Activated CD4-positive, alpha-beta memory T cell treated with anti-CD3 and anti-CD28 coated beads, Interleukin-2, amount 10 ng/mL, durations not matched to agents 7 days and 5 days (primary cell): ENCODE measurements at regions of chr1 and their contacts with region 1.

Region 1: GRCh38 chr1:10398734-10399623 is at the start of gene PGD:
- DNase-seq: peak; percentile 98
- H3K4me3 Mint-ChIP-seq: peak within 1 kb of the TSS; percentile 89
- H3K27ac Mint-ChIP-seq: peak within 1 kb of the TSS; percentile 67
- H3K4me1 Mint-ChIP-seq: peaks cover 44% of the 10 kb centered on the region
- H3K27me3 Mint-ChIP-seq: no peaks in the 10 kb centered on the region
- total RNA-seq, gene PGD: 80.8 to 84.3 TPM

Region 2: GRCh38 chr1:10387413-10388079 is 11.4 kb before region 1 on chr1:
- CTCF ChIA-PET with region 1: interaction called, 6 read pairs
- POLR2A ChIA-PET with region 1: interaction called, 17 read pairs
- DNase-seq: no peak
- H3K4me3 Mint-ChIP-seq: no peak overlapping the region
- H3K27ac Mint-ChIP-seq: no peak overlapping the region
- H3K4me1 Mint-ChIP-seq: no peaks in the 10 kb centered on the region
- H3K27me3 Mint-ChIP-seq: no peaks in the 10 kb centered on the region

Region 3: DNA sequence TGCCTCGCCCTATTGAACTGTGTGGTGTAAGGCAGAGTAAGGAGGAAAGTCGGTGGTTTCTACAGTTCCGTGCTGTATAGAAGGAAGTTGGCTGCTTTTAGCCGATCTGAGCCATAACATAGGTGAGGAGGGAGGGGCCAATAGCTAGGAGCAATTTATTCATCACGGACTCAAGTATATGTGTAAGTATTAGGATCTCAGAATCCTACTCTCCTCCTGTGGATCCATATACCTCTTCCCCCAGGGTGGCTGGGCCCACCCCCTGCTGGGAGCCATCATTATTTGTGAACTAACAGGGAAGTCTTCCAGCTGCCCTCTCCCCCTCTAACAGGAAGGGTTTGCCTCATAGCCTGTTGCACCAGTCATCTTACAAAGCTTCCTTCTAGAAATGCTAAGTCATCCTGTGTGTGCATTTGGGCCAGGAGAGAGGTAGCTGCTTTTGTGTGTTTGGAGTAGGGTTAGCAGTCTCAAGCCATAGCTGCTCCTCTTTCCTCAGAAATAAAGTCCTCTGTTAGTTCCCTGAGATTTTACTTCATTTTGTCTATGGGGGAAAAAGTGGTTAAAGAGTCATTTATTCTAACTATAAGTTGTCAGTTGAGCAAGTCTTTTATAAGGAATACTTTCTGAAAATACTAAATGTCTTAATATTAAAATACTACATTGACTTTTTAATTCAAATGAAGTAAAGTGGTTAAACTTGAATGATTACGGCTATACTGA is 16.4 kb after region 1 on chr1:
- CTCF ChIA-PET with region 1: interaction called, 3 read pairs
- POLR2A ChIA-PET with region 1: interaction called, 14 read pairs
- DNase-seq: peak; percentile 32
- H3K4me3 Mint-ChIP-seq: no peak overlapping the region
- H3K27ac Mint-ChIP-seq: peak overlapping the region; percentile 87
- H3K4me1 Mint-ChIP-seq: peaks cover 17% of the 10 kb centered on the region
- H3K27me3 Mint-ChIP-seq: no peaks in the 10 kb centered on the region

Region 4: GRCh38 chr1:10561955-10562354 is 163.0 kb after region 1 on chr1:
- CTCF ChIA-PET with region 1: no interaction called
- POLR2A ChIA-PET with region 1: no interaction called
- DNase-seq: no peak
- H3K4me3 Mint-ChIP-seq: no peak overlapping the region
- H3K27ac Mint-ChIP-seq: no peak overlapping the region
- H3K4me1 Mint-ChIP-seq: no peaks in the 10 kb centered on the region
- H3K27me3 Mint-ChIP-seq: no peaks in the 10 kb centered on the region